ENCODE measurements at regions of chr3 and their contacts with region 1.

Region 1: GRCh38 chr3:44571024-44571423 is 13.7 kb upstream of the ZNF660 start:
- DNase-seq: no peak
- H3K4me3 ChIP-seq: no peak overlapping the region
- H3K27ac ChIP-seq: no peak overlapping the region
- H3K4me1 ChIP-seq: no peaks in the 10 kb centered on the region
- H3K27me3 ChIP-seq: no peaks in the 10 kb centered on the region
- CTCF ChIP-seq: no peak
- POLR2A ChIP-seq: no peak

Region 2: DNA sequence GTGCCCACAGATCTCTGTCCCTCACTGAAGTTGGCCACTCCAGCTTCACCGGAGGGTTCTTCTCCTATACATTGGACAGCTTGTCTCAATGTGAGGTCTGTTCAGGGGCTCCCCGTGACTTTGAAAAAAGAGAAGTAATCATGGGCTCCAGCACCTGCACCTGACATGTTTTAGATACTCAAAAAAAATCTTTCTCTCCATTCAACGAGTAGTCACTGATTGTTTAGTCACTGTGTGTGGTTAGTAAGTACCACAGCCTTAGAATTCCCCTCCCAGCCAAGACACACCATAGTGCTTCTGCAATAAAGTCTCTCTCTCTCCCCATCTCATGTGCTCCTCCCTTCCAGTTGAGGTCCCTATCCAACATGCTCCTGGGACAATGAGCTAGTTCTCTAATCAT is 1333.9 kb after region 1 on chr3:
- intact Hi-C with region 1: loop called (anchors 5 kb)
- DNase-seq: no peak
- H3K4me3 ChIP-seq: no peak overlapping the region
- H3K27ac ChIP-seq: no peak overlapping the region
- H3K4me1 ChIP-seq: no peaks in the 10 kb centered on the region
- H3K27me3 ChIP-seq: no peaks in the 10 kb centered on the region
- CTCF ChIP-seq: no peak
- POLR2A ChIP-seq: no peak

Measured in breast epithelium (tissue), 4 donors.